Common myeloid progenitor, CD34-positive (primary cell): ENCODE measurements at regions of chr1 and their contacts with region 1.

Region 1: GRCh38 chr1:86704458-86704971 is at the start of gene SH3GLB1:
- DNase-seq: peak; percentile 92 to 97 (median 96)
- H3K4me3 ChIP-seq: peak within 1 kb of the TSS; percentile 87 to 95 (median 89)
- H3K27ac ChIP-seq: peak within 1 kb of the TSS; percentile 94 to 98
- H3K4me1 ChIP-seq: peaks cover 9 to 45% (median 29%) of the 10 kb centered on the region in 4 experiments
- H3K27me3 ChIP-seq: no peaks in the 10 kb centered on the region

Region 2: DNA sequence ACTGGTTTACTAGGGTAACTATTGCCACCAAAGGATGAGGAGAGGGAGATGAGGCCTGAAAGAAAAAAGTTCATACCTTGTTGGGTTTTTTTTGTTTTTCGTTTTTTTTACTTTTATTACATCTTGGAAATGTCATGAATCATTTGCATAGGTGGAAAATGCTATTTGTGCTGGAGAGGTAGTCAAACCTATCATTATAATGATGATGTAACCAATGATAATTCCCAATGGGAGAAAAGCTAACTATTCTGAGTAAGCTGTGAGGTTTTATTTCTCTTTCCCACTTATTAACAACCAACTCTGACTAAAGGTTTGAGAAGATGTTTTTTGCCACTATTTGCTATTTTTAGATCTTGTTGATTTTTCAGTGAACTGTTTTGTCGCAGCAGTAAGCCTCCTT is 28.8 kb after region 1 on chr1:
- CTCF ChIA-PET with region 1: interaction called, 14 read pairs
- POLR2A ChIA-PET with region 1: interaction called, 16 read pairs
- DNase-seq: no peak
- H3K4me3 ChIP-seq: no peak overlapping the region
- H3K27ac ChIP-seq: peak overlapping the region in 1 of 2 experiments; percentile 43
- H3K4me1 ChIP-seq: no peaks in the 10 kb centered on the region
- H3K27me3 ChIP-seq: no peaks in the 10 kb centered on the region

Region 3: DNA sequence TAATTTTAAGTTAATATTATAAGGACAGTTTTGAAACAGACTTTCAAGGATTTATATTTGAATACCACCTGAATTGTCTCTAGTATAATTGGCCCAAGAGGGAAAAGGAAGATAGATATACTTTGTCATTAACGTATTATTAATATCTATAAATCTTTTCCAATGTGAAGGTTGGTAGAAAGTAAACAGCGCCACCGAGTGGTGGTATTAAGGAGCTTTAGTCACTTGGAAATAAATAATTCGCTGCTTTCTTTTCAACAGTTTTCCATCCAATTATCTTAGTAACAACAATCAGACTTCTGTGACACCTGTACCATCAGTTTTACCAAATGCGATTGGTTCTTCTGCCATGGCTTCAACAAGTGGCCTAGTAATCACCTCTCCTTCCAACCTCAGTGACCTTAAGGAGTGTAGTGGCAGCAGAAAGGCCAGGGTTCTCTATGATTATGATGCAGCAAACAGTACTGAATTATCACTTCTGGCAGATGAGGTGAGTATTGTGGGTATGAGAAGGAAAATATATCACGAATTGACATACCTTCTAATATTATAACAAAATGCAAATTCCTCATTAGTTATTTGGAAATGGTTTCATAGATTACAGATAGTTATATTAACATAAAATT is 37.5 kb after region 1 on chr1:
- CTCF ChIA-PET with region 1: interaction called, 19 read pairs
- POLR2A ChIA-PET with region 1: interaction called, 7 read pairs
- DNase-seq: peak; percentile 58 to 73 (median 67)
- H3K4me3 ChIP-seq: no peak overlapping the region
- H3K27ac ChIP-seq: no peak overlapping the region
- H3K4me1 ChIP-seq: peaks cover 3 to 13% (median 8%) of the 10 kb centered on the region in 4 experiments
- H3K27me3 ChIP-seq: no peaks in the 10 kb centered on the region

Region 4: DNA sequence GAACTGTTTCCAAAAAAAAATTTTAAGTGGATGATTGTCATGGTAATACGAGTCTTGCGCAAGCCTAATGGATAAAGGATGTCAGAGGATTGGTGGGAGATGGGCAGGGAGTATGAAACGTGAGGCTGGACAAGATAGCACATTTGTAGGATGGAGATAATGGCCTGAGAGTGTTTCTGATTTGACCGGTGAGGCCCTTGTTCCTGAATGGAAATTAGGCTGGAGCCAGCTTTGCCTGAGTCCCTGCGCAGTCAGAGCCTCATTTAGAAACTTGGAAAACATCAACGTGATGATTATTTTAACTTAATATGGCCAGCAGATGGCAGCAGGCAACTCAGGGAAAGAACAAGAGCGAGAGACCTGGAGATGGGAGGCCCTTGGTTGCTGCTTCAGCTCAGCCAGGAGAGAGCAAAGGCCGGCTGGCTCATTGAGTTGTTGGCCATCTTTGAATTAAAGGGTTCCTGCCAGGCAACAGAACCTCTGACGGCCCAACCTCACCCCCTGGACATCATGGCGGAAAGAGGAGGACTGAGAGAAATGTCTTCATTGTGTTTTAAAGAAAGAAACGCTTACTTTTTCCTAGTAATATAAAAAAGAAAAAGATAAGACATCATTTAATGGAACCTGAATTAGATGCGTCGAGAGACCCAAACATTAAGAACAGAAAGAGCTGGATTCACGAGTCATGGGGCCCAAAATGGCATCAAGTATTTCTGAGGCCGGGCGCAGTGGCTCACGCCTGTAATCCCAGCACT is 129.1 kb after region 1 on chr1:
- CTCF ChIA-PET with region 1: no interaction called
- POLR2A ChIA-PET with region 1: no interaction called
- DNase-seq: peak; percentile 82 to 89 (median 84)
- H3K4me3 ChIP-seq: no peak overlapping the region
- H3K27ac ChIP-seq: no peak overlapping the region
- H3K4me1 ChIP-seq: no peaks in the 10 kb centered on the region
- H3K27me3 ChIP-seq: no peaks in the 10 kb centered on the region